Ascending aorta (tissue), 2 donors: ENCODE measurements at regions of chr14 and their contacts with region 1.

Region 1: DNA sequence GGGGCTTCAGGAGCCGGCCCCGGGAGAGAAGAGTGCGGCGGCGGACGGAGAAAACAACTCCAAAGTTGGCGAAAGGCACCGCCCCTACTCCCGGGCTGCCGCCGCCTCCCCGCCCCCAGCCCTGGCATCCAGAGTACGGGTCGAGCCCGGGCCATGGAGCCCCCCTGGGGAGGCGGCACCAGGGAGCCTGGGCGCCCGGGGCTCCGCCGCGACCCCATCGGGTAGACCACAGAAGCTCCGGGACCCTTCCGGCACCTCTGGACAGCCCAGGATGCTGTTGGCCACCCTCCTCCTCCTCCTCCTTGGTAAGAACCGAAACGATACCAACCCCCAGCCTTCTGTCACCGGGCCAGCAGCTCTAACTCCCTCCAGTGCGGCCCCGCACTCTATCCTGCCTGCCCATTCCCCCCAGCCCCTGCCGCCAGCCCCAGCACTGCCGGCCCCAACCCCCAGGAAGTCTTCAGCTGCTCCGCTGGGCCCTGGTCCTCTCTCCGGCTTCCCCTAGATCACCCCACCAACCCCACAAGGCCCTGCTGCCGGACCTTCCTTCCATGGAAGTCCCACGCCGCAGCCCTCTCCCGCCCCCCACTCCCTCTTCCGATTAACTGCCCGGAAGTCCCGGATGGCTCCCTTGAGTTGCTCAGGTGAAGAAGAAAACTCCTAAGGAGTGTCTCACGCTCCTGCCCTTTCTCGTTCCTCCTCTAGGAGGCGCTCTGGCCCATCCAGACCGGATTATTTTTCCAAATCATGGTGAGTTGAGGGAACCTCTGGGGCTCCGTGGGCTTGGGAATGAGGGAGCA is 693 bp downstream of the LRP10 start:
- DNase-seq: peak in 1 of 2 donors; percentile 92
- H3K4me3 ChIP-seq: peak overlapping the region; percentile 95 to 100
- H3K27ac ChIP-seq: peak overlapping the region; percentile 99 to 100
- H3K4me1 ChIP-seq: peaks cover 12 to 24% of the 10 kb centered on the region in 2 donors
- H3K27me3 ChIP-seq: no peaks in the 10 kb centered on the region
- CTCF ChIP-seq: peak; percentile 81 to 97 (median 97)

Region 2: GRCh38 chr14:22836301-22837113 is 35.7 kb before region 1 on chr14 and contains the start of gene MMP14:
- intact Hi-C with region 1: loop called (anchors 5 kb)
- DNase-seq: peak; percentile 67 to 94
- H3K4me3 ChIP-seq: peak within 1 kb of the TSS; percentile 68 to 86
- H3K27ac ChIP-seq: peak within 1 kb of the TSS; percentile 91 to 94
- H3K4me1 ChIP-seq: peaks cover 0 to 20% of the 10 kb centered on the region in 2 donors
- H3K27me3 ChIP-seq: no peaks in the 10 kb centered on the region
- CTCF ChIP-seq: peak in 2 of 3 experiments; percentile 51 to 85
- total RNA-seq, gene MMP14: 178 TPM

Region 3: DNA sequence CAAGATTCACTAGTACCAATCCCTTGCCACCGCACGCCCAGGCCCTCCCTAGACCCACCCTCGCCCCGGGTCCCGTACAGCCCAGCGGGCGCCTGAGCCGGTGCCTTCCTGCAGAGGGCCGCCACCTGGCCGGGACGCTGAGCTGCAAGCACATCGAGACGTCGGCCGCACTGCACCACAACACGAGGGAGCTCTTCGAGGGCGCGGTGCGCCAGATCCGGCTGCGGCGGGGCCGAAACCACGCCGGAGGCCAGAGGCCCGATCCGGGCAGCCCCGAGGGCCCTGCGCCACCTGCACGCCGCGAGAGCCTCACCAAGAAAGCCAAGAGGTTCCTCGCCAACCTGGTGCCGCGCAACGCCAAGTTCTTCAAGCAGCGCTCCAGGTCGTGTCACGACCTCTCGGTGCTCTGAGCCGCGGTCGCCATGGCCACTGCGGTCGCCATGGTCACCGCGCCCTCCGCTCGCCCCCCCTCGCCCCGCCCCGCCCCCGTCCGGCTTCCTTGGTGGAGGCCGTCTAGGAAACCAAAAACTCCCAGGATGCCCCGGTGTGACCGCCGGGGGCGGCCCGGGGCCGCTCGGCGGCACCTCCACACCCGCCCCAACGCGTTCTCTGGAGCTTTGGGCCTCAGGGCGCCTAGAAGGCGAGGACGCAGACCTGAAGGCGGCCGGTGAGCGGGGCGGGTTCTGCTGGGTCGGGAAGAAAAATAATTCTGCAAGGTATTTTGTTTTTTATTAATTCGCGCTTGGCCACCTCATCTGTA is 14.4 kb after region 1 on chr14:
- intact Hi-C with region 1: loop called (anchors 1 kb)
- DNase-seq: peak in 1 of 2 donors; percentile 88
- H3K4me3 ChIP-seq: peak overlapping the region; percentile 53 to 68
- H3K27ac ChIP-seq: peak overlapping the region; percentile 22 to 59
- H3K4me1 ChIP-seq: peaks cover 3 to 5% of the 10 kb centered on the region in 2 donors
- H3K27me3 ChIP-seq: no peaks in the 10 kb centered on the region
- CTCF ChIP-seq: no peak

Region 4: GRCh38 chr14:22918804-22919600 is 46.8 kb after region 1 on chr14 and contains the start of gene RBM23:
- intact Hi-C with region 1: loop called (anchors 1 kb)
- DNase-seq: peak; percentile 99 to 100
- H3K4me3 ChIP-seq: peak within 1 kb of the TSS; percentile 57 to 65
- H3K27ac ChIP-seq: peak within 1 kb of the TSS; percentile 86 to 93
- H3K4me1 ChIP-seq: peaks cover 6 to 18% of the 10 kb centered on the region in 2 donors
- H3K27me3 ChIP-seq: no peaks in the 10 kb centered on the region
- CTCF ChIP-seq: no peak
- total RNA-seq, gene RBM23: 113 TPM

Region 5: DNA sequence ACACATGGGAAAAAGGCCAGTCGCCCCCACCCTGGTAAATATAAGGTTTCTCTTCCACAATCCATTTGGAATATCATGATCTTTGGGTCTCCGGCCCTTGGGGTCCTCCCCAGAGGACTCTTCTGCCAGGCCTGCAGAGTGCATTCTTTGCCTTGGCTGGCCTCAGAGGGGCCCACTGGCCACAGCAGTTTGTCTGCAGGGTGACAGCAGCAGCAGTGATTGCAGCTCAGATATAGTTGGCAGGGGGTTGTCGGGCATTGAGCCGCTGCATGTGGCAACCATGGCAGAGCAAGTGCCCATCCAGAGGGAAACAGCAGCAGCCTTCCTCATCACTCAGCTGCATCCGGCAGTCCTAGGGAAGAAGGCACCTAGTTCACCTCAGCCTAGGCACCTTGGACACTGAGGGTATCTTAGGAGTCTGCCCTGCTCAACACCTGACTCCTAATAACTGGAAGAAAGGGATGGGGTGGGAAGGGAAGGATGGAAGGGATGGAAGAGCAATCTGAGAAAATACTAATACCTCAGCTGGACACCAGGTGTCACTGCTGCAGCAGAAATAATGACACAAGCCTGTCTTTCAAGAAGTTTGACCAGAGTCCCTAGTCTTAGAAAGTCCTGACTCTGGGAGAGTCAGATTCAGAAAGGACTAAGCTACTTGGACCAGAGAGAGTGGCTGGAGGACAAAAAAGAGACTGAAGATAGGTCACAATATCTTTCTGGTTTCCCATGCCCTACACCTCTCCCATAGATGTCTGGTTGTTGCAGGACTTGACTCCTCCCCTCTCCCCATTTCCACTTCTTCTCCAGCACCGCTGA is 101.2 kb after region 1 on chr14:
- intact Hi-C with region 1: loop called (anchors 5 kb)
- DNase-seq: no peak
- H3K4me3 ChIP-seq: no peak overlapping the region
- H3K27ac ChIP-seq: no peak overlapping the region
- H3K4me1 ChIP-seq: peaks cover 0 to 22% of the 10 kb centered on the region in 2 donors
- H3K27me3 ChIP-seq: no peaks in the 10 kb centered on the region
- CTCF ChIP-seq: peak; percentile 64 to 68 (median 66)

Region 6: GRCh38 chr14:24366721-24367513 is 1494.7 kb after region 1 on chr14:
- intact Hi-C with region 1: loop called (anchors 5 kb)
- DNase-seq: peak; percentile 65 to 96
- H3K4me3 ChIP-seq: peak overlapping the region; percentile 67 to 78
- H3K27ac ChIP-seq: peak overlapping the region; percentile 96 to 99
- H3K4me1 ChIP-seq: peaks cover 6 to 18% of the 10 kb centered on the region in 2 donors
- H3K27me3 ChIP-seq: no peaks in the 10 kb centered on the region
- CTCF ChIP-seq: no peak